ENCODE measurements at regions of chr11 and their contacts with region 1.

Region 1: DNA sequence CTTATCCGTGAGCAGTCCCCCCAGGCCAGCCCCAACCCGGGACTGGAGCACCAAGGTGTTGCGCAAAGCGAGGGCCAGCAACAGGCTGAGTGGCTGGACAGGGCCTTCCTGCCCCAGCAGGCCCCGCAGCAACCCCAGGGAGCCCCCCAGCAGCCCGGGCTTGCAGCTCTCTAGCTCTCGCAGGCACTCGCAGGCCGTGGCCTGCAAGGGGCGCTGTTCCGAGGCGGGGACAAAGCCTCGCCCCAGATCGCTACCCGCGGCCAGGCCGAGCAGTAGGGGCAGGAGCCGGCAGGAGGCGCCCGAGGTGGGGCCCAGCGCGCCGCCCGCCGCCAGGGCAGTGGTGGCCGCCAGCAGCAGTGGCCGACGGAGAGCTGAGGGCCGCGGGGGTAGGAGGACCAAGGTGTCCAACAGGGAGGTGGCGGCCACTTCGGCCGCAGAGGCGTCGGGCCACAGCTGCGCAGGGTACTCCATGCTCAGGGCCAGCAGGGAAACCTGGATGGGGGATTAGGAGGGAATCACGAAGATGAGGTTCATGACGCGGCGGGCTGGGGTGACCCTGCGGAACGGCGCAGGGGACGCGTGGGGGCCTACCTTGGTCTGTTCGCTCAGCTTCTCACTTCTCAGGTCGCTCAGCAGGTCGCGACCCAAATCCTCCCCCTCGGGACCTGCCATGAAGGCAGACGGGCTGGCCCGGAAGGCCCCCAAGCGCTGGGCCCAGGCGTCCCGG is 762 bp downstream of the AP5B1 start:
- DNase-seq: peak; percentile 47 to 77 (median 62)
- H3K4me3 ChIP-seq: peak overlapping the region; percentile 56
- H3K27ac ChIP-seq: no peak overlapping the region
- H3K4me1 ChIP-seq: peaks cover 9% of the 10 kb centered on the region
- H3K27me3 ChIP-seq: no peaks in the 10 kb centered on the region
- CTCF ChIP-seq: peak in 2 of 3 donors; percentile 65 to 77
- EP300 ChIP-seq: no peak
- POLR2A ChIP-seq: no peak

Region 2: DNA sequence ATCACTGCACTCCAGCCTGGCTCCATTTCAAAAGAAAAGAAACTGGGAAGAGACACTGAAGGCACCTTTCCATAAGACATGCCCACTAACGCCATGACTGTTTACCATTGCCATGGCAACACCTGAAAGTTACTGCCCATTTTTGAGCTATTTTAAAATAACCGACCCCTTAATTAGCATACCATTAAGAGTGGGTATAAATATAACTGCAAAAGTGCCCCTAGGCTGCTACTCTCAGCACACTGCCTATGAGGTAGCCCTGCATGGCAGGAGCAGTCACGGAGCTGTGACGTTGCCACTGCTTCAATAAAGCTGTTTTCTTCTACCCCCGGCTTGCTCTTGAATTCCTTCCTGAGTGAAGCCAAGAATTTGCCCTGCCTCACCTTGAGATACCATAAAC is 49.5 kb before region 1 on chr11:
- intact Hi-C with region 1: no loop called
- DNase-seq: no peak
- H3K4me3 ChIP-seq: no peak overlapping the region
- H3K27ac ChIP-seq: no peak overlapping the region
- H3K4me1 ChIP-seq: no peaks in the 10 kb centered on the region
- H3K27me3 ChIP-seq: no peaks in the 10 kb centered on the region
- CTCF ChIP-seq: no peak
- EP300 ChIP-seq: no peak
- POLR2A ChIP-seq: no peak

Region 3: DNA sequence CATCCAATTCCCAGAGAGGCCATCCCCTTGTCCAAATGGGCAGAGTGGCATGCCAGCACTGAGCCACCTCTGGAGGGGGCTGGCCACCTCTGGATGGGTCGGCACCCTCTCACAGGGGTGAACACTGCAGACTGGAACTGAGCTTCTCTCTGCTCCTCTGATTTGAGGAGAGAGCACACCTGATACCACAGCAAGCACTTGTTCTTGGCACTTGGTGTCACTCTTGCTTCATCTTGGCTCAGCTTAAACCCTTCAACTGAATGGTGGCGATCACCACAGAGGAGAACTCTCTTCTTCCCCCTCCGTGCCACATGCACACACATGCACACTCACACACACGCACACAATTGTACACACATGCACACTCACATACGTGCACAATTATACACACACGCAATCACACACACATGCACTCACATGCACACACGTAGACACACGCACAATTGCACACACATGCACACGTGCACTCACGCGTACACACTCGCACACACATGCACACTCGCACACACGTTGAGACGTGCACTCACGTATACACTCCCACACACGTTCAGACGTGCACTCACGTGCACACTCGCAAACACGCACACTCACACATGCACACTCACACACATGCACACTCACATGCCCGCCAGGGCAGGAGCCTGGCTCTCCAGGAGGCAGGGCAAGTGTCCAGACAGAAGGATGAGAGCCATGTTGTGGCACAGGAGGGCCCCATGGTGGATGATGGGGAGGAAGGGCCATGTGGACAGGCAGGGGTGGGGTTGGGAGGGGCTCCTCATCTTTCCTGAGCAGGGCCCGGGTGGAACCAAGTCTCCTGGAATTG is 30.2 kb after region 1 on chr11:
- intact Hi-C with region 1: loop called in 1 of 4 experiments (anchors 5 kb)
- DNase-seq: no peak
- H3K4me3 ChIP-seq: no peak overlapping the region
- H3K27ac ChIP-seq: no peak overlapping the region
- H3K4me1 ChIP-seq: no peaks in the 10 kb centered on the region
- H3K27me3 ChIP-seq: no peaks in the 10 kb centered on the region
- CTCF ChIP-seq: no peak
- EP300 ChIP-seq: no peak
- POLR2A ChIP-seq: no peak

Region 4: DNA sequence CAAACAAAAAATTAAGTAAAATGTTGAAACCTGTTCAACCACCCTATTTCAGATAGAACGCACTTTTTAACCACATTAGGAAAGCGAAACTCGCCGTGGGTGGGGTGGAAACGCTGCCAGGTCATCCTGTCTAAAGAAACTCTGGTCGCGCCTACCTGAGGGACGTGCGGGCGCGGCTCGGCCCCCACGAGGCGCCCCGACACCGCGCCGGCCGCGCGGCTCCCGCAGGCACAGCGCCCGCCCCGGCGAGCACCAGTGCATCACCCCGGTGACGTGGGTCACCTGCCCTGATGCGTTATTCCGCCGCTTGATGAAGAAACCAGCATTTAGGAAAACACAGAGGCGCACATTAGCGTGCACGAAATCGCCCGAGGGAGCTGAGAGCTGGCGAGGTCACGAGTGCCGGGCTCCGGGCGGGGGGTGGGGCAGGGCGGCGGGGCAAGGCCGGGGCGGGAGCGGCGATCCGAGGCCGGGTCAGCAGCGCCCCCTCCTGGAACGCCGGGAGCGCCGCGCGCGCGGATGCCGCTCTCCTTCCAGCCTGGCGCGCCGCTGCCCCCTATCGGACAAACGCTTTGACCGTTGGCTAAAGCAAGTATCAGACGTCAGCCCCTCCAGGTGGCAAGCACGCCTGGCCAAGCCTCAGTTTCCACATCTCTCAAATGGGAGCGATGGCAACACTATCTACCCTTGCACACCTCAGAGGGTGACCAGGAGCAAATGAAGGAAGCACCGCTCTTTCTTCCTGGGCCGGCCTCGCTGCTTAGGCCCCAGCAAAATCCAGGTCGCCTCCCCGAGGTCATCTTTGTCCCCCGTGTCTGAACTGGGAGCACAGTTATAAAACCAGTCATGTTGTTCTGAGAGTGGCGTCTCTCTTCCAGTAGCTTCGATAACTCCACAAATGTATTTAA is 38.1 kb after region 1 on chr11:
- intact Hi-C with region 1: loop called in 2 of 4 experiments (anchors 1 to 5 kb)
- DNase-seq: peak; percentile 92 to 98 (median 97)
- H3K4me3 ChIP-seq: peak overlapping the region; percentile 49
- H3K27ac ChIP-seq: peak overlapping the region in 1 of 2 donors; percentile 72
- H3K4me1 ChIP-seq: peaks cover 2% of the 10 kb centered on the region
- H3K27me3 ChIP-seq: no peaks in the 10 kb centered on the region
- CTCF ChIP-seq: peak; percentile 96 to 97 (median 96)
- EP300 ChIP-seq: no peak
- POLR2A ChIP-seq: no peak

Measured in ovary (tissue), 10 donors.